ENCODE measurements at regions of chr14 and their contacts with region 1.

Region 1: DNA sequence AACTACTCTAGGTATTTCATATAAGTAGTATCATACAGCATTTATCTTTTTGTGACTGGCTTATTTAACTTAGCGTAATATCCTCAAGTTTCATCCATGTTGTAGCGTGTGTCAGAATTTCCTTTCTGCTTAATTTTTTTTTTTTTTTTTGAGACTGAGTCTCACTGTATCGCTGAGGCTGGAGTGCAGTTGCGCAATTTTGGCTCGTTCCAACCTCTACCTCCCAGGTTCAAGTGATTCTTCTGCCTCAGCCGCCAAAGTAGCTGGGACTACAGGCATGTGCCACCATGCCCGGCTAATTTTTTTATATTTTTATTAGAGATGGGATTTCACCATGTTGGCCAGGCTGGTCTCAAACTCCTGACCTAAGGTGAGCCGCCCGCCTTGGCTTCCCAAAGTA is 28.9 kb downstream of the PNMA1 start:
- DNase-seq: no peak
- H3K4me3 ChIP-seq: no peak overlapping the region
- H3K27ac ChIP-seq: no peak overlapping the region
- H3K4me1 ChIP-seq: no peaks in the 10 kb centered on the region
- H3K27me3 ChIP-seq: no peaks in the 10 kb centered on the region
- CTCF ChIP-seq: no peak

Region 2: DNA sequence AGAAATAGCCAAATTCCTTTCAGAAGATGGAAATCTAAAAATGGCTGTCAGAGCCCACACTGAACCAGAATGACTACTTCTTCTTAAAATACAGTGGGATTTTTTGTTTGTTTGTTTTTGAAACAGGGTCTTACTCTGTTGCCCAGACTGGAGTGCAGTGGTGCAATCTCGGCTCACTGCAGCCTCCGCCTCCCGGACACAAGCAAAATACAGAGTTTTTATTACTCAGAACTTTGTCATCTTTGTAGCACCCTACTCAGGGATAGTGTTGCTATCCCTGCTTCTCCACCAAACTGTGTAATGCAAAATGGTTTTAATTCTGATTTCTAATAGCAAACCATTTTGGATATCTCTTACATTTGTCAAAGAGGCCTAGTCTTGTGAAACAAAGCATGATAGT is 217.7 kb after region 1 on chr14:
- CTCF ChIA-PET with region 1: interaction called, 11 read pairs
- POLR2A ChIA-PET with region 1: no interaction called
- intact Hi-C with region 1: no loop called
- DNase-seq: no peak
- H3K4me3 ChIP-seq: no peak overlapping the region
- H3K27ac ChIP-seq: no peak overlapping the region
- H3K4me1 ChIP-seq: no peaks in the 10 kb centered on the region
- H3K27me3 ChIP-seq: no peaks in the 10 kb centered on the region
- CTCF ChIP-seq: no peak

Region 3: DNA sequence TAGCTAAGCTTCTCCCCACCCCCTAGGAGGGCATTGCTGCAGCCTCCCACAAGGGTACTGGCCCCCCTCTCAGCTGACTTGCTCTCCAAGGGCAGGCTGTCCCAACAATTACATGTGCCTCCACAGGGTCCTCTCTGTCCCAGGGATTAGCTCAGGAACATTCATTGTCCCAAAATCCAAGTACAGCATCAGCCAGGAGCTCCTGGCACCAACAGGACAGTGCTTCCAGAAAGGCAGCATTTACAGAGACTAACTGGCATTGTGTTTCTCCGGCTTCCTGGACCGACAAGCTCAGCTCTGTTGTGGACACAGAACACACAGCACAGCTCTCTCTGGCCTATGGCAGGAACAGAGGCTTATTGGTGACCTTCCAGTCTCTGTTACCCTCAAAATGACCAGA is 595.7 kb after region 1 on chr14:
- CTCF ChIA-PET with region 1: no interaction called
- POLR2A ChIA-PET with region 1: interaction called, 11 read pairs
- intact Hi-C with region 1: no loop called
- DNase-seq: no peak
- H3K4me3 ChIP-seq: no peak overlapping the region
- H3K27ac ChIP-seq: no peak overlapping the region
- H3K4me1 ChIP-seq: peaks cover 2% of the 10 kb centered on the region
- H3K27me3 ChIP-seq: no peaks in the 10 kb centered on the region
- CTCF ChIP-seq: no peak

Measured in PC-9 (cell line).